CD4-positive, alpha-beta T cell (primary cell): ENCODE measurements at regions of chr12 and their contacts with region 1.

Region 1: DNA sequence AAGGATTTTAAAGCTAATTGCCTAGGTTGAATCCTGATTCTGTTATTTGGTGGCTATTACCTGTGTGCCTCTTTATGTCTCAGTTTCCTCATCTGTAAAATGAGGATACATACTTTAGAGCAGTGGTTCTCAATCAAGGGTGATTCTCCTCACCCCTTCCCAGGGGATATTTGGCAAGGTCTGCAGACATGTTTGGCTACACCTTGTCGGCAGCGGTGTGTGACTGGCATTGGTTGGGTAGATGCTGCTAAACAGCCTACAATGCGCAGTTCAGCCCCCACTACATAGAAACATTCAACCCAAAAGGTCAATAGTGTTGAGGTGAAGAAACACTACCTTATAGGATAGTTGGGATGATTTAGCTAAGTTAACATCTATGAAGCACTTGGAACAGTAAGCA is 23.4 kb downstream of the LDHB start:
- DNase-seq: no peak
- ATAC-seq: no peak
- H3K4me3 ChIP-seq: no peak overlapping the region
- H3K4me3 Mint-ChIP-seq: no peak overlapping the region
- H3K27ac ChIP-seq: no peak overlapping the region
- H3K27ac Mint-ChIP-seq: peak overlapping the region; percentile 64
- H3K4me1 ChIP-seq: no peaks in the 10 kb centered on the region
- H3K4me1 Mint-ChIP-seq: peaks cover 39% of the 10 kb centered on the region
- H3K27me3 ChIP-seq: no peaks in the 10 kb centered on the region
- H3K27me3 Mint-ChIP-seq: no peaks in the 10 kb centered on the region
- CTCF ChIP-seq: no peak

Region 2: GRCh38 chr12:21650833-21651396 is 16.7 kb after region 1 on chr12:
- CTCF ChIA-PET with region 1: interaction called, 3 read pairs
- POLR2A ChIA-PET with region 1: interaction called, 3 read pairs
- intact Hi-C with region 1: loop called in 1 of 2 experiments (anchors 2 kb)
- DNase-seq: no peak
- ATAC-seq: no peak
- H3K4me3 ChIP-seq: no peak overlapping the region
- H3K4me3 Mint-ChIP-seq: peak overlapping the region; percentile 9
- H3K27ac ChIP-seq: no peak overlapping the region
- H3K27ac Mint-ChIP-seq: peak overlapping the region; percentile 28
- H3K4me1 ChIP-seq: peaks cover 32% of the 10 kb centered on the region
- H3K4me1 Mint-ChIP-seq: peaks cover 97% of the 10 kb centered on the region
- H3K27me3 ChIP-seq: no peaks in the 10 kb centered on the region
- H3K27me3 Mint-ChIP-seq: no peaks in the 10 kb centered on the region
- CTCF ChIP-seq: no peak